ENCODE measurements at regions of chr12 and their contacts with region 1.

Region 1: DNA sequence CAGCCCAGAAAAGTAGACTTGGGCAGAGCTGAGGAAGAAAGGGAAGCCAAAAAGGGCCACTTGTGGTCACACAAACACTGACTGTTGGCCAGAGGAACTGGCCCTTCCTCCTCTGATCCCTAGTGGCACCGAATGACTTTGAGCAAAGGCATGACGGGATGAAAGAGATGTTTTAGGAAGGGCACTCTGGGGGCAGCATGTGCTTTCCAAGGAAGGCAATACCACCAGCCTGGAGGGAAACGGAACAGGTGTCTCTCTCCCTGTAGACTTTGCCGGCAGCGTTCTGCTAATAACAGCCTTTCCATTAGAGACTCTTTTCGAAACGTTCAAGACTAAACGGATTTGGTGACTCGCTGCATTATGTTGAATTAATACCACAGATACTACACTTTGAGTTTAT is 12.3 kb upstream of the FBXO21 start:
- DNase-seq: no peak
- ATAC-seq: no peak
- H3K4me3 Mint-ChIP-seq: no peak overlapping the region
- H3K27ac Mint-ChIP-seq: no peak overlapping the region
- H3K4me1 Mint-ChIP-seq: no peaks in the 10 kb centered on the region
- H3K27me3 Mint-ChIP-seq: peaks cover 5% of the 10 kb centered on the region
- CTCF ChIP-seq: no peak

Region 2: GRCh38 chr12:117212563-117213190 is 10.1 kb after region 1 on chr12:
- CTCF ChIA-PET with region 1: interaction called, 22 read pairs
- POLR2A ChIA-PET with region 1: no interaction called
- intact Hi-C with region 1: no loop called
- DNase-seq: peak; percentile 83
- ATAC-seq: peak; percentile 42
- H3K4me3 Mint-ChIP-seq: no peak overlapping the region
- H3K27ac Mint-ChIP-seq: no peak overlapping the region
- H3K4me1 Mint-ChIP-seq: no peaks in the 10 kb centered on the region
- H3K27me3 Mint-ChIP-seq: peaks cover 9% of the 10 kb centered on the region
- CTCF ChIP-seq: peak; percentile 79

Region 3: DNA sequence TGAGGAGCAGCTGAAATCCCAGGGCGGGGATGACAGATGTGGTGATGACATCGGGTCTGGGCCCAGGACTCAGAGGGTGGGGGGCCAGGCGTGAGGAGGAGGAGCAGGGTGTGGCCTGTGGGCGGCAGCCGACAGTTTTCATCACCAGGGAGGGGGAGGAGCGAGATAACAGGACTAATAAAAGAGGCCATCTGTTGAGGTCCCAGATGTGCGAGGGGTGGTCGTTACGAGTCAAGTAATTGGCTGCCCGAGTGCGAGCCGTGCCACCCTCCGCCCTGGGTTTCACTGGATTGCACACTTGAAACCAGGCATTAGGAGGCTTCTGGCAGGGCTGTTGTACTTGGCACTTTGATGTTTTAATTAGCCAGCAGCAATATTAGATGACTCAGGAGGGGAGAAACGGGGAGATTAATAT is 91.6 kb after region 1 on chr12:
- CTCF ChIA-PET with region 1: no interaction called
- POLR2A ChIA-PET with region 1: no interaction called
- intact Hi-C with region 1: no loop called
- DNase-seq: no peak
- ATAC-seq: no peak
- H3K4me3 Mint-ChIP-seq: no peak overlapping the region
- H3K27ac Mint-ChIP-seq: no peak overlapping the region
- H3K4me1 Mint-ChIP-seq: no peaks in the 10 kb centered on the region
- H3K27me3 Mint-ChIP-seq: peaks cover 6% of the 10 kb centered on the region
- CTCF ChIP-seq: no peak

Measured in activated CD8-positive, alpha-beta T cell treated with anti-CD3 and anti-CD28 coated beads for 36 hours (primary cell).